Common myeloid progenitor, CD34-positive (primary cell): ENCODE measurements at regions of chr2 and their contacts with region 1.

Region 1: GRCh38 chr2:201158111-201158929 is 24.6 kb upstream of the CASP10 start:
- DNase-seq: peak; percentile 96 to 99 (median 98)
- H3K4me3 ChIP-seq: peak overlapping the region in 2 of 7 experiments; percentile 42 to 51
- H3K27ac ChIP-seq: peak overlapping the region; percentile 43 to 85
- H3K4me1 ChIP-seq: peaks cover 12 to 46% (median 22%) of the 10 kb centered on the region in 4 experiments
- H3K27me3 ChIP-seq: no peaks in the 10 kb centered on the region

Region 2: GRCh38 chr2:200963124-200963917 is 195.0 kb before region 1 on chr2 and contains the start of gene ORC2:
- CTCF ChIA-PET with region 1: interaction called, 11 read pairs
- POLR2A ChIA-PET with region 1: no interaction called
- DNase-seq: peak; percentile 95 to 96 (median 96)
- H3K4me3 ChIP-seq: peak within 1 kb of the TSS; percentile 80 to 97 (median 91)
- H3K27ac ChIP-seq: peak within 1 kb of the TSS; percentile 84 to 92
- H3K4me1 ChIP-seq: peaks cover 9 to 30% (median 20%) of the 10 kb centered on the region in 4 experiments
- H3K27me3 ChIP-seq: no peaks in the 10 kb centered on the region

Region 3: DNA sequence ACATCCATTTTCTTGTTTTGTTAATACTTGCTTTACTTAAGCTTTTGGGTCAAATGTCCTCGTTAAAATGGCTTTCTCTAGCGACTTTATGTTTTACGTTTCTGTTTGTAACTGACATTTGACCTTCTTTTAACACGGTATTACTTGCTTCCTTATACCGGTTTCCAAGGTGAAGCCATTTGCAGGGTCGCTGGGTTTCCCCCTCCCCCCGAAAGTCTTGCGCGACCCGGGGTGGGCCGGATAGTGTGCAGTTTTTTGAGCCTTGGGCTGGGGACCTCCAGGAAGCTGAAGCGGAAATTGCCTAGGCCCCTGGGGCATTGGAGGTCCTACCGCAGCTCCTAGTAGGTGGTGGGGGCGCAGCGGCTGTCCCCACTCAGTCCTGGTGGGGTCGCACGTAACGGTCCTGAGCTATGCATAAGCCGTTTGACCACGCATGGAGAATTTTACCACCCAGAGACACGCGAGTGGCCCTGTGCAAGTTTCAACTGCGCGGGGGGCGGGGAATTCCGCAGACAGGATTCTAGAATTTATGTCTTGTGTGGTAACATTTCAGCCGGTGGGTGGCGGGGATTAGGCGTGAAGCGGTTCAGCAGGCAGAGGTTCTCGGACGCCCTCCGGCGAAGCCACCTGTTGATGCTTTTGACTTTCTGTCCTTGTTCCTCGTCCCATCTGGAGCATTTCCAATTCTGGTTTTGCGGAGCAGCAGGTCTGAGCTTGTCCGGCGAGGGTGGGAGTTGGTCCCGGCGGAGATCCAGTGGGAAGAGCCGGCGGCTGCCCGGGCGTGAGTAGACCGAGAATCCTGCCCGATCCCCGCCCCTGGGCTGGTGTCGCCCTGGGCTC is 40.0 kb before region 1 on chr2:
- CTCF ChIA-PET with region 1: interaction called, 107 read pairs
- POLR2A ChIA-PET with region 1: interaction called, 27 read pairs
- DNase-seq: peak; percentile 94 to 95 (median 94)
- H3K4me3 ChIP-seq: peak overlapping the region; percentile 88 to 100 (median 95)
- H3K27ac ChIP-seq: peak overlapping the region; percentile 93 to 97
- H3K4me1 ChIP-seq: peaks cover 33 to 69% (median 62%) of the 10 kb centered on the region in 4 experiments
- H3K27me3 ChIP-seq: no peaks in the 10 kb centered on the region

Region 4: DNA sequence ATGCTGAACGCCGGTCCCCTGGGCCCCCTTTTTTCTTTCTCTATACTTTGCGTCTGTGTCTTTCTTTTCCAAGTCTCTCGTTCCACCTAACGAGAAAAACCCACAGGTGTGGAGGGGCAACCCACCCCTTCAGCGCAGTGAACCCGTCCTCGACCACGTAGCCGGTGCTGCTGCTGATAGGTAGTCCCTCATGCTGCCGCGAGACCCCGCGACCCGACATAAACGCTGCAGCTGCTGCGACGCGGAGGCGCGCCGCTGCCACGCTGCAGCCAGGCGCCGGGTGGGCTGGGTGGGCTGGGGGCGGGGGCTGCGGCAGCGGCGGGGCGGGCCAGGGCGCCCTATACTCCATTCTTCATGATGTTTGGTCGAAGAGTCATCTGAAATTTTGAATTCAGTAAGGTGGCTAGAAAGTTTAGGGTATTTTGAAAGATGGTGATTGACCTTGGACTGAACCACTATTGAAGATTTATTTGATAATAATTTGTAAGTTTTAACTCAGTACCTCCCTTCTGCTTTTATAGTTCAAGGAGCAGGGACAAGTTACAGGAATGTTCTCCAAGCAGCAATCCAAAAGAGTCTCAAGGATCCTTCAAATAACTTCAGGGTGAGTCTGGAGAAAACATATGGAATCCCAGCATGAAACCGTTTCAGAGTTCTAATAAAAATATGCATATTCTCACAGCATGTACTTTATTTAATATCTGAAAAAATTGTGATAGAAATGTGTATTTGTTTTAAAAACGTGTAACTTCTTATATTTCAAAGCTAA is 18.3 kb before region 1 on chr2:
- CTCF ChIA-PET with region 1: interaction called, 34 read pairs
- POLR2A ChIA-PET with region 1: interaction called, 4 read pairs
- DNase-seq: no peak
- H3K4me3 ChIP-seq: no peak overlapping the region
- H3K27ac ChIP-seq: peak overlapping the region in 1 of 2 experiments; percentile 43
- H3K4me1 ChIP-seq: peaks cover 0 to 7% (median 6%) of the 10 kb centered on the region in 4 experiments
- H3K27me3 ChIP-seq: no peaks in the 10 kb centered on the region

Region 5: DNA sequence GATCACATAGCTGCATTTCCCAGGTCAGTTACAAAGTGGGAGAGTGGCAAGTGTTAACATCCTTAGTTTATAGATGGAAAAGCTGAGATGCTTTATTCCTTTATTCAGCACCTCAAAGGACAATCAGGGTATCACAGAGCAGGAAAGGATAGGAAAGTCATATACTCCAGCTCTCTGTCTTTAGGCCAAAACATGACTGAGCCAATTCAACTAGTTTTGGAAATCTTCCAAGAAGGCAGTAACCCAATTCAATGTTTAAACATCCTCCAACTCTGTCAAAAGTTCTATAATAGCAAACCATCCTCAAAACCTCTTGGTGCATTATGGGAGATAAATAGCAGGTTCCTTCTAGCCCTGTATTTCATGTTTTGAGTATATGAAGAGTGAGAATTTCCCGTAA is 127.2 kb after region 1 on chr2:
- CTCF ChIA-PET with region 1: no interaction called
- POLR2A ChIA-PET with region 1: no interaction called
- DNase-seq: no peak
- H3K4me3 ChIP-seq: no peak overlapping the region
- H3K27ac ChIP-seq: no peak overlapping the region
- H3K4me1 ChIP-seq: no peaks in the 10 kb centered on the region
- H3K27me3 ChIP-seq: no peaks in the 10 kb centered on the region